ENCODE measurements at regions of chr12 and their contacts with region 1.

Region 1: GRCh38 chr12:62435303-62436163 is 31.1 kb upstream of the MON2 start:
- DNase-seq: peak; percentile 54
- CTCF ChIP-seq: peak; percentile 59

Region 2: DNA sequence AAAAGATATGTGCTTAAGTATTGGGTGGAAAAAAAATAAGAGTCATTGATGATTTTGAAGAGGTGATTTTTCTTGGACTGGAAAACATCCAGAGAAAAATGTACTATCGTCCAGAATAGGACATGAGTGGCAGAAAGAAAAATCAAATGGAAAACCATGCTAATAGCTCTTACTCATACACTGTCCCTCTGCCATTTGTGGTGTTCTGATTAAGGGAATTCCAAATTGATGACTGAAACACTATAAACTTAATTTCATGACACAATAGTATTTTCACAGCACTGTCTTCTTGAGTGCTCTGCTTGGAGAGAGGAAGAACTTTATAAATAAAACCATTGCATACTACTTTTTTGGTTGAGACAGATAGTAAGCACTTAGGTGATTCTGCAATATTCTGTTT is 102.9 kb before region 1 on chr12:
- in situ Hi-C with region 1: no loop called
- DNase-seq: no peak
- CTCF ChIP-seq: no peak

Region 3: DNA sequence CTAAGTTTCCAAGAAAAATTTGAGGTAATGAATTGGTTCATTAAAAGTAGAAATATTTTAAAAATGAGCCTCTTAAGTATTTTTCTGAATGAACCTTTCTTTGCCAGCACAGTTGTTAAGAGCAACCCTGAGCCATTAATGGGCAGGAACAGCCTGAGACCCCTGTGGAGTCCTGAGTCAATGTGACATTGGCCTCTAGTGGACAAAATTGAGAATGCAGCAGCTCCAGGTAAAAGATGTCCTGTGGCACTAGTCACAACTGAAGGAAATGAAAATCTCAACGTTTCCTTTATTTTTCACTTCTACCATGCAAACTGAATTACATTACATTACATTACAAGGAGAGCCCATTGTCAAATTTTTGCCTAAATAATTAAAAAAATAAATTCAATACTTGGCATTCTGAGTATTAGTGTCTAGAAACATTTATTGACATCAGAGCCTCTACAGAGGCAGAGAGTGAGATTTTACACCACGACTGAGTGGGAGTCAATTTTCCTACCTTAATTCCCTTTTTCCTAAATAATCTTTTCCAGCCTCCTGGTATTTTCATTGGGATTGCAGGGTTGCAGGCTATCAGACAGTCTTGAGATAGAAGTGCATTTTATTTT is 363.7 kb after region 1 on chr12:
- in situ Hi-C with region 1: loop called (anchors 10 kb)
- DNase-seq: peak; percentile 78
- CTCF ChIP-seq: peak; percentile 93